Activated T-helper 1 cell treated with anti-CD3 and anti-CD28 coated beads, Interleukin-12 subunit alpha, Interleukin-12 subunit beta, Interleukin-2, Interleukin-4 antibody, amounts not matched to agents 30 ng/mL and 10 ng/mL and 1 ng/mL, durations not matched to agents 14 hours and 24 hours and 36 hours (primary cell): ENCODE measurements at regions of chr20 and their contacts with region 1.

Region 1: DNA sequence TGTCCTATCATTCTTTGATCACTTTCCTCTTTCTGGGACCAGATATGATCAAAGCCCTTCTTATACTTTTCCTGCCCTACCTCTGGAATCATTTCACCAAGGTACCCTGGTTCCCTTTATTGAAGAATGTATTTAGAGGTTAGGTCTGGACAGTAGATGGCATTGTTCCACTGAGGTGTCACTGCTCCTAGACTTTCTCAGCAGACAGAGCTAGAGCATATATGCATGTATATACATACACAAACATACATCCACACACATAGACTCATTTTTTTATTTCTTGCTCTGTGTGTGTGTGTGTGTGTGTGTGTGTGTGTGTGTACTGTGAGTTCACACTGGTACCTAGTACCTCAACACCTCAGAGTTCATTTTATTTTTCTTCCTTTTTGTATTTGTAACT is 40.9 kb downstream of the PTPRA start:
- DNase-seq: no peak
- H3K4me3 Mint-ChIP-seq: no peak overlapping the region
- H3K27ac Mint-ChIP-seq: no peak overlapping the region
- H3K4me1 Mint-ChIP-seq: peaks cover 8% of the 10 kb centered on the region
- H3K27me3 Mint-ChIP-seq: no peaks in the 10 kb centered on the region

Region 2: GRCh38 chr20:2955257-2955970 is 41.3 kb after region 1 on chr20:
- intact Hi-C with region 1: loop called (anchors 2 kb)
- DNase-seq: no peak
- H3K4me3 Mint-ChIP-seq: no peak overlapping the region
- H3K27ac Mint-ChIP-seq: peak overlapping the region; percentile 83
- H3K4me1 Mint-ChIP-seq: peaks cover 16% of the 10 kb centered on the region
- H3K27me3 Mint-ChIP-seq: no peaks in the 10 kb centered on the region

Region 3: DNA sequence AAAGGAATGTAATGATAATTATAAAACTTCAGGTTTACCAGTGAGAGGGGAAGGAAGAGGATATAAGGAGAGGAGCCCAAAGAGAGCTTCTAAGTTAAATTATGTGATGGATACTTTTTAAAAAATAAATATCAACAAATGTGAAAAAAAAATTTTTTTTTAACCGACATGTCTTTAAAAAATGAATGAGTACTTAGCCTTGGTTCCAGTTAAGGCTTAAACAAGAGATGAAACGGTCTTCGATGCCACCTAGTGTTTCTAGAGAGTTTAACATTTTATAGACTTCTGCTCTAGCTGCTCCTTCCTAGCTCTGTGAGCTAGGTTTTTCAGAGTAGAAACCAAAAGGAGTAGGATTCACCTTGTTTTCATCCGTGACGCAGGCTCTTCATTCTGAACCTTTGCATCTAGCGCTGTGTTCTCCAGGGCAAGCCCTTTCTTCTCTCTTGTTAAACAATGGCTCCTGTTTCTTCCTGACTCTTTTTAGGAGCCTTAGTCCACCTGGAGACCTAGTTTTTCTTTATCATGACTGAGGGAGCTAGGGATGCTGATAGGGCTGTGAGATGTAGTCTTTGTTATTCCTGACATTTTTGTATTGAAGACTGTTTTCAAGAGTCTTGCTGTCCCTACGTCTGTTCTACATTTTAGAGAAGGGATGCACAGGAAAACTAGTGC is 86.8 kb after region 1 on chr20:
- intact Hi-C with region 1: loop called (anchors 1 kb)
- DNase-seq: no peak
- H3K4me3 Mint-ChIP-seq: no peak overlapping the region
- H3K27ac Mint-ChIP-seq: no peak overlapping the region
- H3K4me1 Mint-ChIP-seq: no peaks in the 10 kb centered on the region
- H3K27me3 Mint-ChIP-seq: no peaks in the 10 kb centered on the region